ENCODE measurements at regions of chr1 and their contacts with region 1.

Region 1: GRCh38 chr1:178542560-178543356 is 29.8 kb downstream of the TEX35 start:
- DNase-seq: peak; percentile 89
- ATAC-seq: peak; percentile 77
- H3K4me3 ChIP-seq: peak overlapping the region; percentile 64
- H3K27ac ChIP-seq: peak overlapping the region; percentile 93
- H3K4me1 ChIP-seq: peaks cover 40% of the 10 kb centered on the region
- H3K27me3 ChIP-seq: no peaks in the 10 kb centered on the region
- CTCF ChIP-seq: peak; percentile 88
- POLR2A ChIP-seq: peak; percentile 21; the same call in 1 of the 2 replicates
- RAD21 ChIP-seq: peak; percentile 82

Region 2: GRCh38 chr1:178566187-178566586 is 23.4 kb after region 1 on chr1:
- CTCF ChIA-PET with region 1: no interaction called
- POLR2A ChIA-PET with region 1: no interaction called
- dilution Hi-C with region 1: no loop called
- in situ Hi-C with region 1: no loop called
- intact Hi-C with region 1: no loop called
- DNase-seq: peak; percentile 51
- ATAC-seq: no peak
- H3K4me3 ChIP-seq: no peak overlapping the region
- H3K27ac ChIP-seq: no peak overlapping the region
- H3K4me1 ChIP-seq: no peaks in the 10 kb centered on the region
- H3K27me3 ChIP-seq: no peaks in the 10 kb centered on the region
- CTCF ChIP-seq: no peak
- POLR2A ChIP-seq: no peak
- RAD21 ChIP-seq: no peak

Region 3: GRCh38 chr1:178644308-178645120 is 101.8 kb after region 1 on chr1:
- CTCF ChIA-PET with region 1: interaction called, 4 read pairs
- POLR2A ChIA-PET with region 1: no interaction called
- dilution Hi-C with region 1: no loop called
- in situ Hi-C with region 1: no loop called
- intact Hi-C with region 1: loop called (anchors 2 kb)
- DNase-seq: peak; percentile 59
- ATAC-seq: 0 out of 2 replicates have a peak, but pooled peaks have one; percentile 16
- H3K4me3 ChIP-seq: no peak overlapping the region
- H3K27ac ChIP-seq: peak overlapping the region; percentile 53; the same call in 1 of the 2 replicates
- H3K4me1 ChIP-seq: peaks cover 20% of the 10 kb centered on the region
- H3K27me3 ChIP-seq: no peaks in the 10 kb centered on the region
- CTCF ChIP-seq: no peak
- POLR2A ChIP-seq: no peak
- RAD21 ChIP-seq: no peak

Region 4: DNA sequence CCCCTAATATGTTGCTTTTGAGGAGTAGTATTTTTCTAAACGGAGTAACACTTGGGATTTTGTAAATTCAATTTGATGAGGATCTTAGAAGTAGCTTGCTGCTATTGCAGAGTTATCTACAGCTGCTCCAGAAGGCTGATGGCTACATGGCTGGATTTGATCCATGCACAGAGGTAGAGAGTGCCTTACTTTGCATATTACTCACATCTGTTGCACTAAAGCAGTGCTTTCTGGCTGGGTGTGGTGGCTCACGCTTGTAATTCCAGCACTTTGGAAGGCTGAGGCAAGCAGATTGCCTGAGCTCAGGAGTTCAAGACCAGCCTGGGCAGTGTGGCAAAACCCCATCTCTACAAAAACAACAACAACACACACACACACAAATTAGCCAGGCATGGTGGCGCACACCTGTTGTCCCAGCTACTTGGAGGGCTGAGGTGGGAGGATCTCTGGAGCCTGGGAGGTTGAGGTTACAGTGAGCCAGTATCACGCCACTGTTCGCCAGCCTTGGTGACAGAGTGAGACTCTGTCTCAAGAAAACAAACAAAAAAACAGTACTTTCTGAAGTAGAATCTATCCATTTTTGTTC is 206.9 kb after region 1 on chr1:
- CTCF ChIA-PET with region 1: interaction called, 3 read pairs
- POLR2A ChIA-PET with region 1: no interaction called
- dilution Hi-C with region 1: no loop called
- in situ Hi-C with region 1: no loop called
- intact Hi-C with region 1: loop called (anchors 10 kb)
- DNase-seq: no peak
- ATAC-seq: no peak
- H3K4me3 ChIP-seq: no peak overlapping the region
- H3K27ac ChIP-seq: no peak overlapping the region
- H3K4me1 ChIP-seq: peaks cover 8% of the 10 kb centered on the region
- H3K27me3 ChIP-seq: no peaks in the 10 kb centered on the region
- CTCF ChIP-seq: no peak
- POLR2A ChIP-seq: no peak
- RAD21 ChIP-seq: no peak

Region 5: GRCh38 chr1:178821134-178821866 is 278.5 kb after region 1 on chr1:
- CTCF ChIA-PET with region 1: no interaction called
- POLR2A ChIA-PET with region 1: no interaction called
- dilution Hi-C with region 1: no loop called
- in situ Hi-C with region 1: no loop called
- intact Hi-C with region 1: loop called (anchors 5 kb)
- DNase-seq: no peak
- ATAC-seq: no peak
- H3K4me3 ChIP-seq: no peak overlapping the region
- H3K27ac ChIP-seq: no peak overlapping the region
- H3K4me1 ChIP-seq: peaks cover 5% of the 10 kb centered on the region
- H3K27me3 ChIP-seq: no peaks in the 10 kb centered on the region
- CTCF ChIP-seq: no peak
- POLR2A ChIP-seq: no peak
- RAD21 ChIP-seq: no peak

Region 6: DNA sequence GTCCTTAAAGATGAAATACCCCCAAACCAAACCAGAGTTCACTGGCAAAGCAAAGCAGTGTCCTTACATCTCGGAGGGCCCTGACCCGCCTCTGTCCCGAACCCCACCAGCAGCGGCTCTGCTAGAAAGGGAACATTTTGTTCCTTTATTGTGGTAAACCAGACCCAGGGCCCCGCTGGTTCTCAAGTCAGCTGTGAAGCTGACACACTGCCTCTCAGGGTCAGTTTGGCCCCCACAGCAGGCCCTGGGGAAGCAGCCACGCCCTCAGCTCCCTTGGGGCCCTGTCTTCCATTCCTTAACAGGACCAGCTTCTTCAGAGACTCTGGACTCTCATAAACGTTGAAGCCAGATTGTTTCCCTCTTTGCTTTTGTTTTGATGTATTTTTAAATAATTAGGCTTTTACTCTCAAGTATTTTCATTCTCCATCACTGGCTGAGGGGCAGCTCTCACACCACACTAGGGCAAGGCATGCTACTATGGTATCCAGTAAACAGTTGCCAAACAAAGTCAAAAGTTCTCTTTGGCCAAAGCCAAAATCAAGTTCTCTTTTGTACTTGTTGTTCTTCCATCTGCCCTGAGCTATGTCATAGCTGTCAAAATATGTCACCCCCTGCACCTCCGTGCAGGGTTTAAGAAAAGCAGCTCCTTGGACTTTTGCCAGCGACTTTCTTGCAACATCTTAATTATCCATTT is 389.2 kb after region 1 on chr1:
- CTCF ChIA-PET with region 1: no interaction called
- POLR2A ChIA-PET with region 1: no interaction called
- dilution Hi-C with region 1: no loop called
- in situ Hi-C with region 1: no loop called
- intact Hi-C with region 1: no loop called
- DNase-seq: peak; percentile 32
- ATAC-seq: peak; percentile 51
- H3K4me3 ChIP-seq: no peak overlapping the region
- H3K27ac ChIP-seq: no peak overlapping the region; the same call in 1 of the 2 replicates
- H3K4me1 ChIP-seq: peaks cover 5% of the 10 kb centered on the region; the same call in 1 of the 2 replicates
- H3K27me3 ChIP-seq: no peaks in the 10 kb centered on the region
- CTCF ChIP-seq: no peak
- POLR2A ChIP-seq: no peak
- RAD21 ChIP-seq: no peak

Region 7: GRCh38 chr1:179002552-179003345 is 460.0 kb after region 1 on chr1:
- CTCF ChIA-PET with region 1: interaction called, 16 read pairs
- POLR2A ChIA-PET with region 1: interaction called, 8 read pairs
- dilution Hi-C with region 1: no loop called
- in situ Hi-C with region 1: no loop called
- intact Hi-C with region 1: loop called (anchors 1 kb)
- DNase-seq: peak; percentile 52
- ATAC-seq: peak; percentile 97
- H3K4me3 ChIP-seq: no peak overlapping the region
- H3K27ac ChIP-seq: no peak overlapping the region
- H3K4me1 ChIP-seq: no peaks in the 10 kb centered on the region; the same call in 1 of the 2 replicates
- H3K27me3 ChIP-seq: no peaks in the 10 kb centered on the region
- CTCF ChIP-seq: peak; percentile 93
- POLR2A ChIP-seq: no peak; the same call in 1 of the 2 replicates
- RAD21 ChIP-seq: peak; percentile 95

Measured in IMR-90 (cell line).